ENCODE measurements at regions of chr4 and their contacts with region 1.

Region 1: GRCh38 chr4:18021722-18022571 is at the start of gene LCORL:
- DNase-seq: peak; percentile 95
- ATAC-seq: peak; percentile 89 to 94
- total RNA-seq, gene LCORL: 7.5 to 8.1 TPM

Region 2: GRCh38 chr4:17347445-17347844 is 674.5 kb before region 1 on chr4:
- intact Hi-C with region 1: no loop called
- DNase-seq: no peak
- ATAC-seq: peak; percentile 40 to 44

Region 3: GRCh38 chr4:17636341-17636695 is 385.6 kb before region 1 on chr4:
- intact Hi-C with region 1: no loop called
- DNase-seq: no peak
- ATAC-seq: peak; percentile 8 to 18

Region 4: GRCh38 chr4:17810260-17811077 is 211.5 kb before region 1 on chr4 and contains the starts of genes DCAF16 and NCAPG:
- intact Hi-C with region 1: loop called in 1 of 2 experiments (anchors 10 kb)
- DNase-seq: peak; percentile 99
- ATAC-seq: peak; percentile 100
- total RNA-seq, gene DCAF16: 15.4 to 21.2 TPM
- total RNA-seq, gene NCAPG: 0.24 to 1.8 TPM

Measured in left cardiac atrium (tissue), 4 donors.